Endothelial cell of umbilical vein (primary cell): ENCODE measurements at regions of chr2 and their contacts with region 1.

Region 1: GRCh38 chr2:54558188-54559005 is 102.3 kb downstream of the SPTBN1 start:
- DNase-seq: peak; percentile 86
- H3K4me3 ChIP-seq: peak overlapping the region; percentile 50 to 99 (median 99)
- H3K27ac ChIP-seq: peak overlapping the region; percentile 99
- H3K4me1 ChIP-seq: peaks cover 42% of the 10 kb centered on the region
- H3K27me3 ChIP-seq: no peaks in the 10 kb centered on the region
- CTCF ChIP-seq: no peak
- POLR2A ChIP-seq: peak; percentile 53

Region 2: GRCh38 chr2:54471221-54471711 is 87.1 kb before region 1 on chr2:
- CTCF ChIA-PET with region 1: no interaction called
- POLR2A ChIA-PET with region 1: no interaction called
- dilution Hi-C with region 1: no loop called
- intact Hi-C with region 1: loop called (anchors 5 kb)
- DNase-seq: peak; percentile 65
- H3K4me3 ChIP-seq: no peak overlapping the region
- H3K27ac ChIP-seq: peak overlapping the region; percentile 45
- H3K4me1 ChIP-seq: peaks cover 33% of the 10 kb centered on the region
- H3K27me3 ChIP-seq: no peaks in the 10 kb centered on the region
- CTCF ChIP-seq: no peak
- POLR2A ChIP-seq: no peak

Region 3: DNA sequence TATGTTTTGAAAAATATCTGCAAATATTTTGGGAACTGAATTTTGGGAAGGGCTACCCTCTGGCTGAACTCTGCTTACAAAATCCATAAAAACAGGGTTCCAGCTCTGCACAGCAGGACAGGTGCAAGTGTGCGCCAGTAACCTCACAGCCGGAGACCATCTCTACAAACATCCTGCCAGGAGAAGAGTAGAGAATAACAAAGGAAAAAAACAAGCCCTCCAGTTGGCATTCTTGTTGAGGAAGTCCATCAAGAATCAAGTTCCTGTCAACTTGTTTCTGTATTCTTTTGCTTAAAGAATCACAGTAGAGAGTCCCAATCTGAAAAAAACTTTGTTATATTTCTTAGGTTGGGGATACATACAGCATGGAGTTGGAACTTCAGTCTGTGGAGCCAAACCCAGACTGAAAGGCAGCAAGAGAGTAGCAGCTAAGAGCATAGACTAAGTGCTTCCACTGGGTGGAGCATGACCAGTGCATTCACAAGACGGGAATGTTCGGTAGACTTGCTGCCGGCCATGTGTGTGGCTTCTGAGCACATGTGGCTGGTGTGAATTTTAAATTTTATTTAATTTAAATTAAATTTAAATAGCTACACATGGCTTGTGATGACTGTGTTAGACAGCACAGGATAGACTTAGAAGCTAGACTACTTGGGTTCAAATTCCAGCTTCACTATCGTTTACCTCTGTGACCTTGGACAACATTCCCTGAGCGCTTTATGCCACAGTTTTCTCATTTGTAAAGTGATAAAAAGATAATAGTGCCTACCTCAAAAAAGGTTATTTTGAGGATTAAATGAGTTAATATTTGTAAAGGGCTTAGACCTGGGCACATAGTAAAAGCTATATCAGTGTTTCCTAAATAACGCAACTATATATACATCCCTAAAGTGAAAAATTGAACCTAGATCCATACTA is 60.4 kb before region 1 on chr2:
- CTCF ChIA-PET with region 1: no interaction called
- POLR2A ChIA-PET with region 1: no interaction called
- dilution Hi-C with region 1: no loop called
- intact Hi-C with region 1: no loop called
- DNase-seq: peak; percentile 77
- H3K4me3 ChIP-seq: no peak overlapping the region
- H3K27ac ChIP-seq: no peak overlapping the region
- H3K4me1 ChIP-seq: peaks cover 8% of the 10 kb centered on the region
- H3K27me3 ChIP-seq: no peaks in the 10 kb centered on the region
- CTCF ChIP-seq: peak; percentile 27 to 48
- POLR2A ChIP-seq: no peak

Region 4: DNA sequence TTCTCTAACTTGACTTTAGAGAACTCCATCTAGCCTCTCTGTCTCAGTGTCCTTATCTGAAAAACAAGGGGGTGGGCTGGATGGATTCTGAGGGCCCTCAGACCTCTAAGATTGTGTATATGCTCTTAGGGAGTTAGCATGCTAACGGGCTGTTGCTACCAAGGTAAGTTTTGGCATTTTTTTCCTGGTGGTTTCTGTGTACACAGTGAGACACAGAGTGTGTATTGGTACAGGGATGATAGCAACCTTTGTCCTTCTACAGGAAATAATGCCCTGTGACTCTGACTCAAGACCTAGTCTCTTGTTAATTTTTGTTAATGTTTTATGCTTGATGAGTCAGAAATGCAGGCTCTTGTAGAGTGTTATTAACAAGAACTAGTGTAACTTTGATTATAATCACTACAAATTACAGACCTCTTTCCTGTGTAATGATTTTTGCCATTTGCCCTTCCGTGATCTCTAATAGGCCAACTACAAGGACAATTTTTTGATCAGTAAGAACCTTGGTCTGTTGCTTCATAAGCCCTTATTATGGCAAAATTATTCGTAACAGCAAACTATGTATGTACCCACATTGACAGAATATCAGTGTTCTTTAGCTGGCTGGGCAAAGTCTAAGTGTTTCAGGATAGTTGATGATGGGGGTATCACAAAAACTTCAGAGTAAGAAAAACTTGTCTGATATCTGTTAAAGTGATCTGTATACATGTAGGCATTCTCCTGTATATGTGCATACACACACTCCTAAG is 12.5 kb before region 1 on chr2:
- CTCF ChIA-PET with region 1: interaction called, 3 read pairs
- POLR2A ChIA-PET with region 1: no interaction called
- dilution Hi-C with region 1: no loop called
- intact Hi-C with region 1: loop called (anchors 1 kb)
- DNase-seq: peak; percentile 75
- H3K4me3 ChIP-seq: no peak overlapping the region
- H3K27ac ChIP-seq: peak overlapping the region; percentile 82
- H3K4me1 ChIP-seq: peaks cover 15% of the 10 kb centered on the region
- H3K27me3 ChIP-seq: no peaks in the 10 kb centered on the region
- CTCF ChIP-seq: no peak
- POLR2A ChIP-seq: no peak

Region 5: DNA sequence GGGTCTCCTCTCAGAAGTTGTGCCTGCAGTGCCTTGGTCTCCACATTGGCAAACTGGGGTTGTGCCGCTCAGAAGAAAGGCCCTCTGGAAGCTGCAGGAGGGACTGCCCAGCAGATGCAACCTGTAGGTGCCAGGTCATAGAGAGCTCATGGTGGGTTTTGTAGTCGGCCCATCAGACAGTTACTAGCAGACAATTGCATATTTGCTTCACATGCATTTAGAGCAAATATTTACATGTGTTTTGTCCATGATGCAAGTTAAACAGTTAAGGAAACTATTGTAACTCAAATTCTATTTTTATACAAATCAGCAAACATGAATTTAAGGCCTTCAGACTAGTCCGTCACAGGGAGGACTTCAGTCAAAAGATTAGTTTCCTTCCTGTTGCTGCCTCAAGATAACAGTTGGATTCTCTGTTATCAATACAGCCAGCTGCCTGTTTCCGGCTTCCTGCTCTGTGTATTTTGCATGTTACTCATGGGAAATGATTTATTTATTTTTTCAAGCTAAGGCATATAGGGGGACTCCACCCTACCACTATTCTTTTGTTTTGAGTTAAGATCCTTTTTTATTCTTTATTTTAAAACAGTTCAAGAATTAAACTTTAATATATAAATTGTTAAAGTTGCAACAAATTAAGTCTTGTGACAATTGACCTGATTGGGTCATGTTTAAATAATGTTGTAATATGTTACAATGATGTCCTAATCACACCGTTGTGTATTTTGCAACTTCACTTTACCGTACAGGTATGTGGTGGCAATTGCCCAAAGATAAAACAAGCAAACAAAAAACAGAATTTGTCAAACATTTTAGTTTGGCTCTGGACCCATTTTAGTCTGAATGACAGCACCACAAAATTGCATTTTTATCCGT is 31.2 kb after region 1 on chr2:
- CTCF ChIA-PET with region 1: interaction called, 3 read pairs
- POLR2A ChIA-PET with region 1: interaction called, 8 read pairs
- dilution Hi-C with region 1: no loop called
- intact Hi-C with region 1: loop called (anchors 1 kb)
- DNase-seq: peak; percentile 99
- H3K4me3 ChIP-seq: peak overlapping the region in 1 of 3 experiments; percentile 46
- H3K27ac ChIP-seq: peak overlapping the region; percentile 91
- H3K4me1 ChIP-seq: peaks cover 64% of the 10 kb centered on the region
- H3K27me3 ChIP-seq: no peaks in the 10 kb centered on the region
- CTCF ChIP-seq: no peak
- POLR2A ChIP-seq: peak; percentile 95

Region 6: GRCh38 chr2:54634564-54635511 is 76.4 kb after region 1 on chr2:
- CTCF ChIA-PET with region 1: interaction called, 6 read pairs
- POLR2A ChIA-PET with region 1: no interaction called
- dilution Hi-C with region 1: no loop called
- intact Hi-C with region 1: loop called (anchors 1 kb)
- DNase-seq: peak; percentile 92
- H3K4me3 ChIP-seq: no peak overlapping the region
- H3K27ac ChIP-seq: peak overlapping the region; percentile 91
- H3K4me1 ChIP-seq: peaks cover 37% of the 10 kb centered on the region
- H3K27me3 ChIP-seq: no peaks in the 10 kb centered on the region
- CTCF ChIP-seq: no peak
- POLR2A ChIP-seq: no peak